Activated B cell treated with CpG ODN at 0.5 μM for 24 hours (primary cell): ENCODE measurements at regions of chr6 and their contacts with region 1.

Region 1: GRCh38 chr6:54173089-54173488 is 61.8 kb downstream of the MLIP start:
- DNase-seq: no peak
- ATAC-seq: no peak
- H3K4me3 Mint-ChIP-seq: no peak overlapping the region
- H3K27ac Mint-ChIP-seq: no peak overlapping the region
- H3K4me1 Mint-ChIP-seq: no peaks in the 10 kb centered on the region
- H3K27me3 Mint-ChIP-seq: no peaks in the 10 kb centered on the region
- CTCF ChIP-seq: no peak

Region 2: DNA sequence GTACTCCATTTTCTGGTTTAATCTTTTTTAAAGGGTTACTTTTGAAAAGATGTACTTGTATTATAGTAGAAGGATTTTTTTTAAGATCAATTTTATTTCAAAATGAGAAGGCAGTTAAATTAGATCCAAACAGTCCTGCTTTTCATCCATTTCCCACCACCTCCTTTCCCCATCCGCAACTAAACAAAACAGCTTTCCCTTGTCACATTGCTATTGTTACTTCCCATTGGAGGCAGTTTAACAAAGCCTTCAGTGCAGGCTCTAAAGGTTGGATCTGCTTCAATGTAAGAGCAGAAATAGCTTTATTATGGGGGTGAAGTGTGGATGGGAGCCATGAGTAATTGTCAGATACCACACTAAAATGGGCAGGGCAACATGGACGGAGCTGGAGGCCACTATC is 312.6 kb before region 1 on chr6:
- CTCF ChIA-PET with region 1: no interaction called
- POLR2A ChIA-PET with region 1: interaction called, 10 read pairs
- intact Hi-C with region 1: no loop called
- DNase-seq: no peak
- ATAC-seq: no peak
- H3K4me3 Mint-ChIP-seq: no peak overlapping the region
- H3K27ac Mint-ChIP-seq: no peak overlapping the region
- H3K4me1 Mint-ChIP-seq: no peaks in the 10 kb centered on the region
- H3K27me3 Mint-ChIP-seq: no peaks in the 10 kb centered on the region
- CTCF ChIP-seq: no peak